CD8-positive, alpha-beta T cell (primary cell): ENCODE measurements at regions of chr6 and their contacts with region 1.

Region 1: DNA sequence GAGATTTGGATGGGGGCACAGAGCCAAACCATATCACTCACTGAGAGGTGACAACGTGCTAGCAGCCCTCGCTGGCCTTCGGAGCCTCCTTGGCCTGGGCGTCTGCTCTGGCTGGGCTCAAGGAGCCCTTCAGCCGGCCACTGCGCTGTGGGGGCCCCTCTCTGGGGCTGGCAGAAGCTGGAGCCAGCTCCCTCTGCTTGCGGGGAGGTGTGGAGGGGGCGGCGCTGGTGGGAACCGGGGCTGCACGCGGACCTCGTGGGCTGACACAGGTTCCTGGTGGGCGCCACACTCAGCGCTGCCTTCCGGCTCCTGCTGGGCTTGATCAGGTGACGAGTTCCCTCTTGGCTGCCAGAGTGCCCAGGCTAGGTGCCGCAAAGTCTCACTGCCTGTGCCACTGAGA is 489.2 kb downstream of the PKHD1 start:
- DNase-seq: no peak
- ATAC-seq: no peak
- H3K4me3 ChIP-seq: no peak overlapping the region
- H3K4me3 Mint-ChIP-seq: no peak overlapping the region
- H3K27ac ChIP-seq: no peak overlapping the region
- H3K27ac Mint-ChIP-seq: no peak overlapping the region
- H3K4me1 ChIP-seq: no peaks in the 10 kb centered on the region
- H3K4me1 Mint-ChIP-seq: no peaks in the 10 kb centered on the region
- H3K27me3 ChIP-seq: no peaks in the 10 kb centered on the region
- H3K27me3 Mint-ChIP-seq: no peaks in the 10 kb centered on the region
- CTCF ChIP-seq: no peak

Region 2: DNA sequence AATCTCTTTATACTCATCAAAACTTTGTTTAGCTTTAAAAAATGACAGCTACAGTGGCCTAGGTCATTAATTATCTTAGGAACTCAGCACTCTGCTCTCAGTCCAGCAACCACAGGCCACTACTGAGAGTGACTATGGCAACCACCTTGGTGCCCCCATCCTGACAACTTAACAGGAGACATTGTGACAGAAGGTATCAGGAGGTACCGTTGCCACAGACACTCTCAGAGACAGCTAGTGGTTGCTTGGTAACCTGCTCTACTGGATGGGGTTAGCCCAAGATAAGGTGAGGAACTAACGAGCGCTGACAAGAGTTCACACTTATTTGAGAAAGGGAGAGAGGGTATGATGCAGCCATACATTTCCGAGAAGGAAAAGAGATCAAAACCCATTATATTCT is 960.9 kb before region 1 on chr6:
- CTCF ChIA-PET with region 1: no interaction called
- POLR2A ChIA-PET with region 1: no interaction called
- intact Hi-C with region 1: loop called in 1 of 2 experiments (anchors 5 kb)
- DNase-seq: no peak
- ATAC-seq: no peak
- H3K4me3 ChIP-seq: no peak overlapping the region
- H3K4me3 Mint-ChIP-seq: no peak overlapping the region
- H3K27ac ChIP-seq: no peak overlapping the region
- H3K27ac Mint-ChIP-seq: no peak overlapping the region
- H3K4me1 ChIP-seq: no peaks in the 10 kb centered on the region
- H3K4me1 Mint-ChIP-seq: no peaks in the 10 kb centered on the region
- H3K27me3 ChIP-seq: no peaks in the 10 kb centered on the region
- H3K27me3 Mint-ChIP-seq: no peaks in the 10 kb centered on the region
- CTCF ChIP-seq: no peak

Region 3: GRCh38 chr6:51626391-51626790 is 28.2 kb after region 1 on chr6:
- CTCF ChIA-PET with region 1: no interaction called
- POLR2A ChIA-PET with region 1: no interaction called
- intact Hi-C with region 1: no loop called
- DNase-seq: no peak
- ATAC-seq: no peak
- H3K4me3 ChIP-seq: no peak overlapping the region
- H3K4me3 Mint-ChIP-seq: no peak overlapping the region
- H3K27ac ChIP-seq: no peak overlapping the region
- H3K27ac Mint-ChIP-seq: no peak overlapping the region
- H3K4me1 ChIP-seq: no peaks in the 10 kb centered on the region
- H3K4me1 Mint-ChIP-seq: no peaks in the 10 kb centered on the region
- H3K27me3 ChIP-seq: no peaks in the 10 kb centered on the region
- H3K27me3 Mint-ChIP-seq: no peaks in the 10 kb centered on the region
- CTCF ChIP-seq: no peak

Region 4: DNA sequence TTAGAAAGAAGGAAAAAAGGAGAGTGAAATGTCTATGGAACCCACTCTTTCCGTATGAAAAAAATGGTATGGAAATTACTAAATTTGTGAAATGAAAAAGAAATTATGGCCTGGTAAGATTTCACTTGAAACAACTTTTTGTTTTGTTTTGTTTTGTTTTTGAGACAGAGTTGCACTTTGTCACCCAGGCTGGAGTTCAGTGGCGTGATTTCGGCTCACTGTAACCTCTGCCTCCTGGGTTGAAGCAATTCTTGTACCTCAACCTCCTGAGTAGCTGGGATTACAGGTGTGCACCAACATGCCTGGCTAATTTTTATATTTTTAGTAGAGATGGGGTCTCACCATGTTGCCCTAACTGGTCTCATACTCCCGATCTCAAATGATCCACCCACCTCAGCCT is 1260.2 kb after region 1 on chr6:
- CTCF ChIA-PET with region 1: no interaction called
- POLR2A ChIA-PET with region 1: no interaction called
- intact Hi-C with region 1: no loop called
- DNase-seq: no peak
- ATAC-seq: no peak
- H3K4me3 ChIP-seq: no peak overlapping the region
- H3K4me3 Mint-ChIP-seq: no peak overlapping the region
- H3K27ac ChIP-seq: no peak overlapping the region
- H3K27ac Mint-ChIP-seq: no peak overlapping the region
- H3K4me1 ChIP-seq: no peaks in the 10 kb centered on the region
- H3K4me1 Mint-ChIP-seq: no peaks in the 10 kb centered on the region
- H3K27me3 ChIP-seq: peaks cover 0 to 2% of the 10 kb centered on the region in 2 experiments
- H3K27me3 Mint-ChIP-seq: peaks cover 46% of the 10 kb centered on the region
- CTCF ChIP-seq: no peak